Panc1 (cell line): ENCODE measurements at regions of chr2 and their contacts with region 1.

Region 1: DNA sequence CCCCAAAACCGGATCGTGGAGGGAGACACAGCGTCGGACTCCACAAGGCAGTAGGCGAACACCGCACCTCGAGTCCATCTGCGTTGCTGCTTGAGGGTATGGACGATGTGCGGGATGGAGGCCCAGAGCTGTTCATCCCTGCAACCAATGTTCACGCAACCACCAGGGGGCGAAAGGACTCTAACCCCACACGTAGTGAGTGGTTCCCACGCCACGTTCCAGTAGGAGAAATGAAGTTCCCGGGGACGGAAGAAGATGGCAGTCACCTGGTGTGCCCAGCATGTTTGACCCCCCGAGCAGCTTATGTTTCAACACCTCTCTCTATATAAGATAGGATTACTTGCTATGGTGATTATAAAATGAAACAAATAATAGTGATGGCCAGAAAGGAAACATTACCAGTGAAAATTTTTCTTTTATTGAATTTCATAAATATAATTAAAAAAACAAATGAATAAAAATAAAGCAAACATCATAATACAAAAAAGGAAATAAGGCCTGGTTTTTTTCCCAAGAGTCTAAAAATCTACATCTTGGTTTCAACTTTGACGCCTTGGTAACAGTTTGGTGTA is 184.3 kb downstream of the SH3BP4 start:
- DNase-seq: peak; percentile 61
- ATAC-seq: peak; percentile 95
- H3K4me3 ChIP-seq: no peak overlapping the region
- H3K27ac ChIP-seq: no peak overlapping the region
- H3K4me1 ChIP-seq: peaks cover 3% of the 10 kb centered on the region; the same call in 1 of the 2 replicates
- H3K27me3 ChIP-seq: no peaks in the 10 kb centered on the region
- CTCF ChIP-seq: peak; percentile 85

Region 2: GRCh38 chr2:234130777-234131181 is 1005.3 kb before region 1 on chr2:
- CTCF ChIA-PET with region 1: no interaction called
- POLR2A ChIA-PET with region 1: no interaction called
- in situ Hi-C with region 1: no loop called
- intact Hi-C with region 1: no loop called
- DNase-seq: no peak
- ATAC-seq: no peak
- H3K4me3 ChIP-seq: no peak overlapping the region
- H3K27ac ChIP-seq: peak overlapping the region; percentile 99
- H3K4me1 ChIP-seq: peaks cover 9% of the 10 kb centered on the region
- H3K27me3 ChIP-seq: no peaks in the 10 kb centered on the region
- CTCF ChIP-seq: no peak

Region 3: DNA sequence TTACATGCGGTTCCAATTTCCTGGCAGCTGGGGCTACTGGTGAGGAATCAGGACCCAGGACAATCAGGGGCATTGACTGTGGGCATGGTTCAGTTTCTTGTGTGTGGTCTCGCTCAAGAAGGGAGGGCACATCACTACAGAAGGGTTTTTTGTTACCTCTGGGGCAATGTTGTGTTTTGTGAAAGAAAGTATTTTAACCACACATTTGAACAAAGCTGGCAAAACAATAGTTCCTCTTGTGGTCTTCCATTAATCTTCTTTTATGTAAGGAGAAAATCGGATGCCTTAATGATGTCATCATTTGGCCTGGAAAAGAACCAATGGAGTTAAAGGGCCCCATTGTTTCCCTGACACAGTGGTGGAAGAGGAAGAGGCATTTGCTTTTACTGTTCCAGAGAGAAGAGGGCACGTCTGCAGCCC is 13.2 kb after region 1 on chr2:
- CTCF ChIA-PET with region 1: no interaction called
- POLR2A ChIA-PET with region 1: no interaction called
- in situ Hi-C with region 1: no loop called
- intact Hi-C with region 1: no loop called
- DNase-seq: no peak
- ATAC-seq: no peak
- H3K4me3 ChIP-seq: no peak overlapping the region
- H3K27ac ChIP-seq: no peak overlapping the region
- H3K4me1 ChIP-seq: no peaks in the 10 kb centered on the region
- H3K27me3 ChIP-seq: peaks cover 15% of the 10 kb centered on the region; the same call in 1 of the 2 replicates
- CTCF ChIP-seq: no peak

Region 4: DNA sequence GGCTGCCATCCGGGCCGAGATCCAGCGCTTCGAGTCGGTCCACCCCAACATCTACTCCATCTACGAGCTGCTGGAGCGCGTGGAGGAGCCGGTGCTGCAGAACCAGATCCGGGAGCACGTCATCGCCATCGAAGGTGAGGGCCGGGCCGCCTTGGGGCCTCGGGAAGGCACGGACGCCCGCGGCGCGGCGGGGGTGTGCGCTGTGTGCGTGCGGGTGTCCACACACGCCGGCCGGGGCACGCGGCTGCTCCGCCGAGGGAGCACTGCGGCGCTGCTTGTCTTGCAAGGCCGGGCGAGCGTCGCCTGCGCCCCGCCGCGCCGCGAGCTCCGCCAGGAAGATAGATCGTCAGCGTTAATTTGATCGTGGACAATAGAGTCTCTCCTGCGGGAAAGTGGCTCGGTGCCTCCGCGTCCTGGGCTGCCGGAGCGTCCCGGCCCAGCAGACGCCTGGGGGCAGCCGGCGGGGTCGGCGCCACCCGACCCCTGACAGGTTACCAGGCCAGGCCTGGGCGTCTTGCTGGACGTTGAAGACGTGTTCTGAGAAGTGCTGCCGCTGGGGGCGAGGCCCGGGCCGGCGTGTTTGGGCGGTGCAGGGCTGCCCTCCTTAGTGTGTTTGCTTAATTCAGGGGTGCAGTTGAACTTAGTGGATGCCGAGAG is 358.8 kb after region 1 on chr2:
- CTCF ChIA-PET with region 1: interaction called, 3 read pairs
- POLR2A ChIA-PET with region 1: no interaction called
- in situ Hi-C with region 1: no loop called
- intact Hi-C with region 1: loop called (anchors 5 kb)
- DNase-seq: no peak
- ATAC-seq: peak; percentile 40
- H3K4me3 ChIP-seq: peak overlapping the region; percentile 68 to 78
- H3K27ac ChIP-seq: peak overlapping the region; percentile 49
- H3K4me1 ChIP-seq: peaks cover 33% of the 10 kb centered on the region
- H3K27me3 ChIP-seq: no peaks in the 10 kb centered on the region
- CTCF ChIP-seq: no peak; the same call in 1 of the 2 replicates

Region 5: GRCh38 chr2:235500761-235501672 is 364.9 kb after region 1 on chr2:
- CTCF ChIA-PET with region 1: interaction called, 13 read pairs
- POLR2A ChIA-PET with region 1: no interaction called
- in situ Hi-C with region 1: no loop called
- intact Hi-C with region 1: loop called (anchors 5 kb)
- DNase-seq: no peak
- ATAC-seq: peak; percentile 72
- H3K4me3 ChIP-seq: peak overlapping the region; percentile 15 to 46; a peak in 3 of 4 replicates
- H3K27ac ChIP-seq: peak overlapping the region; percentile 78
- H3K4me1 ChIP-seq: peaks cover 67% of the 10 kb centered on the region
- H3K27me3 ChIP-seq: no peaks in the 10 kb centered on the region
- CTCF ChIP-seq: no peak

Region 6: GRCh38 chr2:235595422-235596010 is 459.4 kb after region 1 on chr2:
- CTCF ChIA-PET with region 1: interaction called, 4 read pairs
- POLR2A ChIA-PET with region 1: no interaction called
- in situ Hi-C with region 1: no loop called
- intact Hi-C with region 1: loop called (anchors 2 kb)
- DNase-seq: peak; percentile 73
- ATAC-seq: peak; percentile 82
- H3K4me3 ChIP-seq: no peak overlapping the region
- H3K27ac ChIP-seq: no peak overlapping the region
- H3K4me1 ChIP-seq: no peaks in the 10 kb centered on the region
- H3K27me3 ChIP-seq: no peaks in the 10 kb centered on the region
- CTCF ChIP-seq: peak; percentile 89

Region 7: DNA sequence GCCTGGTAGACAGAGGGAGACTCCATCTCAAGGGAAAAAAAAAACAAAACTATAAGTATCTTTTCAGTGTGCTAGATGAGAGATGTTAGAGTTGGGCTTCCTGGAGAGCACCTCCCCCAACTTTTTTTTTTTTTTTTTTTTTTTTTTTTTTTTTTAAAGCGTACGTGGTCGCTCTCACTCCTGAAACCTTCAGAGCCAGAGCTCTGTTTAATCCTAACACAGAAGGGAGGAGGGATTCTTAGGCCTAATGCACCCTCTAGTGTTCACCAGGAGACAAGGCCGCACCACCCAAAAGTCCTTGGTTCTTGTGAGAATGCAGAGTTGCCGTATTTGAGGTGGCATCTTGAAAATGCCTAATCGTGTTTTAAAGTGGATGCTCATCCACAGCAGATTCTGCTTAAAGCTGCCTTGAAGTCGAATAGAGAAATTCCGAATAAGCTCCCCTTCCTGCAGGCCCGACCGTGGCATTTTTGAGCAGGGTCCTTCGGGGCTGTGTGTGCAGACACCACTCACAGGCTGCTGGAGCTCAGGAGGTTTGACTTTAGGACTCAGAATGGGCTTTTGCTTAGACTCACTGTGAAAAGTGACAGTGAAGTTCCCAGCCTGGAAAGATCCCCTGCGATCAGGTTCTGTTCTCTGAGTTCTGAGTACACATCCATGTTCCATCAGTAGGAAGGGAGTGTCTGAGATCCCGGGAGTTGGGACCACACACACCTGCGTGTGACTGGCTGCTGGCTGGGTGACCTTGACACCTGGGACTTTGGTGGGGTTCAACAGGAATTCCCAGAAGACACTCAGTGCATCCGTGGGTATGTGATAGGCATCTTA is 610.4 kb after region 1 on chr2:
- CTCF ChIA-PET with region 1: interaction called, 3 read pairs
- POLR2A ChIA-PET with region 1: interaction called, 3 read pairs
- in situ Hi-C with region 1: no loop called
- intact Hi-C with region 1: loop called (anchors 10 kb)
- DNase-seq: peak; percentile 50
- ATAC-seq: peak; percentile 97
- H3K4me3 ChIP-seq: no peak overlapping the region
- H3K27ac ChIP-seq: no peak overlapping the region
- H3K4me1 ChIP-seq: no peaks in the 10 kb centered on the region
- H3K27me3 ChIP-seq: no peaks in the 10 kb centered on the region
- CTCF ChIP-seq: peak; percentile 87